Astrocyte of the cerebellum (primary cell): ENCODE measurements at regions of chr11 and their contacts with region 1.

Region 1: DNA sequence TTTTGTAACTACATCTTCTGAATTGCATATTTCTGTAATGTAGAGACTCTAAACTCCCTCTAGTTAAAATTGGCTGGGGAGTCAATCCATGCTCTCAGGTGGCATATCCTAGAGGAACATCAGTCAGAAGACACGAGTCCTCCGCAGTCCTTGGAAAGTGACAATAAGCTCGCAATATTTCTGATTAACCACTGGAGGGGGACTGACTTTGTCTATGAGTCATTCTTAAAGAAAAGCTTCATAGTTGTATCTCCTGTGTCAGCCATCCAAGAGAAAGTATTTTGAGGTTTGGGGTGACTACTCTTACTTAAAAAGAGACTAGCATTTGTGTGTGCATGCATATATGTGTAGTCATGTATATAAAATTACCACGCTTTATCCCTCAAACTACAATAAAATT is 60.2 kb downstream of the SLN start:
- DNase-seq: no peak
- H3K4me3 ChIP-seq: no peak overlapping the region
- CTCF ChIP-seq: no peak

Region 2: DNA sequence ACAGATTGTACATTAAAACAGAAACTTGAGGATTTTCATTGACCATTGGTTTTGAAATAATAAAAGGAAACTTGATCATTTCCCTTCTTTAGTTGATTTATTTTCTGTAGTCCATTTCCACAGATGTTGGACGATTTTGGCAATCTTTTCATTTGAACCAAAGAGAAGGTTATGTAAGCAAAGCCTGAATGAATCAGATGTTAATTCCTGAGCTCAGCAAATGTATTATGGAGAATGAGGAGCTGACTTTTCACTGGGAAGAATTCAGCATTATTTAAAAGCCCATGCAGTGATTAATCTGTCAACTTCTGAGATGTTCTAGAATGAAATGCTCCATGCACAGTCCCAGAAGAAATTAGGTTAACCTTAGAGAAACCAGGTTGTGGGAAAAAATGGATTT is 31.7 kb before region 1 on chr11:
- in situ Hi-C with region 1: loop called (anchors 5 kb)
- DNase-seq: peak; percentile 4
- H3K4me3 ChIP-seq: no peak overlapping the region
- CTCF ChIP-seq: no peak